Heart right ventricle (tissue), 16 donors: ENCODE measurements at regions of chr20 and their contacts with region 1.

Region 1: DNA sequence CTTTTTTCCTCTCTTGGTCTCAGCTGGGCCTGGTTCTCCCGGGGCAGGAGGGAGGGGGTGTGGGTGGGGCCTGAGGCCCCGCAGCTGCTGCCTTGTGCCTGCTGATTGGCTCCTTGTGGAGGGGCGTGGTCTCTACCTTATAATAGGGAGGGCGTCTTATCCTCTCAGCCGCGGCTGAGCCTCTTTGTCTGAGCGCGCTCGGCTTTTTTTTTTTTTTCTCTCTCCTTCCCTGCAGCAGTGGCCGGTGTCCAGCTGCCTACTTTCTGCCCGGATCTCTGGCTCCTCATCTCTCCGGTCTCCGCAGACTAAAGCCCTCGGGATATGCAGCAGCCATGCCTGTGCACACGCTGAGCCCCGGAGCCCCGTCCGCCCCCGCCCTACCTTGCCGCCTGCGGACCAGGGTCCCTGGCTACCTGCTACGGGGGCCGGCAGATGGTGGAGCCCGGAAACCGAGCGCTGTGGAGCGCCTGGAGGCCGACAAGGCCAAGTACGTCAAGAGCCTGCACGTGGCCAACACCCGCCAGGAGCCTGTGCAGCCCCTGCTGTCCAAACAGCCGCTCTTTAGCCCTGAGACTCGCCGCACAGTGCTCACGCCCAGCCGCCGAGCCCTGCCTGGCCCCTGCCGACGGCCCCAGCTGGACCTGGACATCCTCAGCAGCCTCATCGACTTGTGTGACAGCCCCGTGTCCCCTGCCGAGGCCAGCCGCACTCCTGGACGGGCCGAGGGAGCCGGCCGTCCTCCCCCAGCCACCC is 11.1 kb downstream of the FAM110A start:
- DNase-seq: peak; percentile 88 to 95
- ATAC-seq: peak; percentile 95 to 99 (median 98)
- H3K4me3 ChIP-seq: peak overlapping the region in 9 of 10 donors; percentile 17 to 61 (median 49)
- H3K27ac ChIP-seq: peak overlapping the region in 1 of 10 donors; percentile 78
- H3K4me1 ChIP-seq: peaks cover 4 to 66% (median 20%) of the 10 kb centered on the region in 9 donors
- H3K27me3 ChIP-seq: peaks cover 0 to 16% (median 0%) of the 10 kb centered on the region in 7 donors
- CTCF ChIP-seq: no peak

Region 2: GRCh38 chr20:884983-885952 is 40.6 kb after region 1 on chr20:
- intact Hi-C with region 1: loop called in 1 of 10 experiments (anchors 5 kb)
- DNase-seq: peak in 1 of 2 donors; percentile 61
- ATAC-seq: peak; percentile 73 to 84 (median 78)
- H3K4me3 ChIP-seq: no peak overlapping the region
- H3K27ac ChIP-seq: no peak overlapping the region
- H3K4me1 ChIP-seq: peaks cover 0 to 16% (median 8%) of the 10 kb centered on the region in 9 donors
- H3K27me3 ChIP-seq: peaks cover 0 to 23% (median 8%) of the 10 kb centered on the region in 7 donors
- CTCF ChIP-seq: peak in 7 of 9 donors; percentile 14 to 30 (median 24)